Breast epithelium (tissue), 4 donors: ENCODE measurements at regions of chr1 and their contacts with region 1.

Region 1: DNA sequence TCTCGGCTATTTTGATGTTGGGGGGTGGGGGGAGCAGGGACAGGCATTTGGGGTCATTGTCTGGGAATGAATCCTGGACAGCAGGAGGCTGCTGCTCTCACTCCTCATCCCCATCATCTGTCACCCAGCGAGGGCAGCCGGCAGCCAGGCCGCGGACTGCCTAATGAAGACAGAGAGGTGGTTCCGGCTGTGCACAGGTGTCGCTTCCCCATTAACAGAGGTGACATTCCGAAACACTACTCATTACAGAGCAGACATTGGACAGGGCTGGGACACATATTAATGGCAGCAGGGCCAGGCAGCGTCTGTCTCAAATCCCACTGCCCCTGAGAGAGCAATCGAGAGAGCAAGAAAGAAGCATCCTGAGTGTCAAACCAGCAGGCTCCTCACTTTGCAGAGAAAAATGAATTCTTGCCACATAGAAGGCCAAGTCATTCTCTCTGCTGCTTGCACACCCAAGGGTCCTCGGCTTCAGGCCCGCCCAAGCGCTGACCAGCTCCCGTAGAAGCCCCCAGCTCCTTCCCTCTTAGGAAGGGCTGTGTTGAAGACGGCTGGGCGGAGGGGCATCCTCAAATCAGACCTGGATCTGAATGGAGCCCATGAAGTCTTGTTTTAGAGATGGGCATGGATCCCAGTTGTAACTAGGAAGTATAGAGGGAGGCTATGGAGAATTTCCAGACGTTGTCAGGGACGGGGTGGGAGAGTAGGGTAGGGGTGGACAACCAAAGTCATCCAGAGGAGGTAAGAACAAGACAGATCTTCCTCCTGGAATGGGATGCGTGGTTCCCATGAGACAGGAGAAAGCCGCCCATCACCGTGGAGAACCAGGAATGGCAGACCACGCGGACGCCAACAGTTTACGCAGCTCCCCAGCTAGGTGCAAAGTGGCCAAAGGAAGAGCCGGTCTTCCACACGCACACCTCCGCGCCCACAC is 8.2 kb upstream of the LEMD1 start:
- DNase-seq: no peak
- H3K4me3 ChIP-seq: peak overlapping the region; percentile 36 to 79 (median 55)
- H3K27ac ChIP-seq: no peak overlapping the region
- H3K4me1 ChIP-seq: no peaks in the 10 kb centered on the region
- H3K27me3 ChIP-seq: no peaks in the 10 kb centered on the region
- CTCF ChIP-seq: no peak
- POLR2A ChIP-seq: no peak

Region 2: GRCh38 chr1:204544321-204544720 is 885.7 kb before region 1 on chr1:
- intact Hi-C with region 1: loop called (anchors 5 kb)
- DNase-seq: no peak
- H3K4me3 ChIP-seq: no peak overlapping the region
- H3K27ac ChIP-seq: no peak overlapping the region
- H3K4me1 ChIP-seq: no peaks in the 10 kb centered on the region
- H3K27me3 ChIP-seq: no peaks in the 10 kb centered on the region
- CTCF ChIP-seq: no peak
- POLR2A ChIP-seq: no peak

Region 3: DNA sequence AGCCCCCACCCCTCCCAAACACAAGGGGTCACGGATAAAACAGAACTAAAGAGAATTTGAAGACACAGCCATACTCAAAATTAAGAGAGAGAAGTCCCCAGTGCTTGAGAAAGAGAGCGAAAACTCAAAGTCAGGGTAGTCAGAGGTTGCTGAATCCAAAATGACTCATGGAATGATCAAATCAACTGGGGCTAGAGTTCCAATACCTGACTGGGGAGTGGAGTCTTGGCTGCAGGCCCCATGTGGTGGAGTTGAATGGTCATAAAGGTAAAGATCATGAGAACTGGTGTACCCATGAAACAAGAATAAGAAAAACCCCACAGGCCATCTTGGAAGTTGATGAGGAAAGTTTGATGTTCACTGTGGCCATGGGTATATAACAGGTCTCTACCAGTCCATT is 660.0 kb before region 1 on chr1:
- intact Hi-C with region 1: no loop called
- DNase-seq: no peak
- H3K4me3 ChIP-seq: no peak overlapping the region
- H3K27ac ChIP-seq: no peak overlapping the region
- H3K4me1 ChIP-seq: no peaks in the 10 kb centered on the region
- H3K27me3 ChIP-seq: no peaks in the 10 kb centered on the region
- CTCF ChIP-seq: no peak
- POLR2A ChIP-seq: no peak

Region 4: GRCh38 chr1:205449750-205450443 is 19.9 kb after region 1 on chr1:
- intact Hi-C with region 1: no loop called
- DNase-seq: peak in 1 of 2 donors; percentile 87
- H3K4me3 ChIP-seq: peak overlapping the region in 2 of 3 donors; percentile 29 to 44
- H3K27ac ChIP-seq: peak overlapping the region; percentile 77 to 89
- H3K4me1 ChIP-seq: peaks cover 0 to 8% of the 10 kb centered on the region in 2 donors
- H3K27me3 ChIP-seq: peaks cover 0 to 35% of the 10 kb centered on the region in 2 donors
- CTCF ChIP-seq: no peak
- POLR2A ChIP-seq: no peak